MCF 10A (cell line): ENCODE measurements at regions of chr1 and their contacts with region 1.

Region 1: GRCh38 chr1:12434174-12434573 is 183.8 kb downstream of the DHRS3 start:
- DNase-seq: peak; percentile 70
- H3K4me3 Mint-ChIP-seq: no peak overlapping the region
- H3K27ac Mint-ChIP-seq: peak overlapping the region; percentile 36
- H3K4me1 Mint-ChIP-seq: peaks cover 32% of the 10 kb centered on the region
- H3K27me3 Mint-ChIP-seq: no peaks in the 10 kb centered on the region
- CTCF ChIP-seq: no peak

Region 2: DNA sequence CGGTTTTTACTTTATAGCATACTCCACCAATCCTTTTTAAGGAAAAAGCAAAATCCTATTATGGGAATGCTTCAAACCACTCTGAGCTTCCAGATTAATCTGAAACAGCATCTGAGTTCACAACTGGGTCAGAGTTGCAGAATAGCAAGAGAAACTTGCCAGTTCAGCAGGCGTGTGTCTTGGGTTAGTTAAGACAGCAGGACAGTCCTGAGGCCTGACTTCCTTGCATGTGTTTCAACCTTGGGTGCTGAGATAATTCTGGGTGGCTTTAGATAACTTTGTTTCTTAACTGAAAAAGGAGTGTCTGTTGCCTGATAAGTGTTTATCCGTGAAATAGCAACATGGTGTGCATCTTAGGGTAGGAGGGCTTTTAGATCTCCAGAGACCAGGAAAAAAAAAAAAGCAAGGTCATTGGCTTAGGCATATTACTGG is 14.6 kb after region 1 on chr1:
- CTCF ChIA-PET with region 1: interaction called, 8 read pairs
- POLR2A ChIA-PET with region 1: interaction called, 16 read pairs
- intact Hi-C with region 1: no loop called
- DNase-seq: no peak
- H3K4me3 Mint-ChIP-seq: no peak overlapping the region
- H3K27ac Mint-ChIP-seq: no peak overlapping the region
- H3K4me1 Mint-ChIP-seq: peaks cover 13% of the 10 kb centered on the region
- H3K27me3 Mint-ChIP-seq: no peaks in the 10 kb centered on the region
- CTCF ChIP-seq: no peak

Region 3: GRCh38 chr1:12477936-12478611 is 43.9 kb after region 1 on chr1:
- CTCF ChIA-PET with region 1: interaction called, 3 read pairs
- POLR2A ChIA-PET with region 1: interaction called, 18 read pairs
- intact Hi-C with region 1: loop called (anchors 2 kb)
- DNase-seq: peak; percentile 98
- H3K4me3 Mint-ChIP-seq: peak overlapping the region; percentile 9
- H3K27ac Mint-ChIP-seq: peak overlapping the region; percentile 17
- H3K4me1 Mint-ChIP-seq: peaks cover 34% of the 10 kb centered on the region
- H3K27me3 Mint-ChIP-seq: no peaks in the 10 kb centered on the region
- CTCF ChIP-seq: no peak

Region 4: DNA sequence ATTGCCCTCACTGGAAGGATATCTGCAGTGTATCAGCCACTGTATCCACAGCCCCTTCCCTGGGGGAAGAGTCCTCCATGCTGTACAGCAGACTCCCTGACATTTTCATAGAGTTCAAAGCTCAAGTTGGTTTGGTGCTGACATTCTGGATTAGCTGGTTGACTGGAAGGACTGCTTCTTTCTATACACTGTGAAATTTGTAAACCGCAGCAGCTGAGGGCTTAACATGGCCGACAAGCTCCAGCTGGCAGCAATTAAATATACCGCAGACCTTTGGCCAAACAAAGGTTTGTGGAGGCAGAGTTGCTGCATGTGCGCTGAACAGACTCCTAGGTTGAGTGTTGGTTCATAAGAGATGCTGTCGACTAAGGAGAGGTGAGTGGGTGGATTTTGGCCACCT is 57.5 kb after region 1 on chr1:
- CTCF ChIA-PET with region 1: no interaction called
- POLR2A ChIA-PET with region 1: no interaction called
- intact Hi-C with region 1: no loop called
- DNase-seq: no peak
- H3K4me3 Mint-ChIP-seq: no peak overlapping the region
- H3K27ac Mint-ChIP-seq: no peak overlapping the region
- H3K4me1 Mint-ChIP-seq: no peaks in the 10 kb centered on the region
- H3K27me3 Mint-ChIP-seq: no peaks in the 10 kb centered on the region
- CTCF ChIP-seq: no peak